ENCODE measurements at regions of chr2 and their contacts with region 1.

Region 1: DNA sequence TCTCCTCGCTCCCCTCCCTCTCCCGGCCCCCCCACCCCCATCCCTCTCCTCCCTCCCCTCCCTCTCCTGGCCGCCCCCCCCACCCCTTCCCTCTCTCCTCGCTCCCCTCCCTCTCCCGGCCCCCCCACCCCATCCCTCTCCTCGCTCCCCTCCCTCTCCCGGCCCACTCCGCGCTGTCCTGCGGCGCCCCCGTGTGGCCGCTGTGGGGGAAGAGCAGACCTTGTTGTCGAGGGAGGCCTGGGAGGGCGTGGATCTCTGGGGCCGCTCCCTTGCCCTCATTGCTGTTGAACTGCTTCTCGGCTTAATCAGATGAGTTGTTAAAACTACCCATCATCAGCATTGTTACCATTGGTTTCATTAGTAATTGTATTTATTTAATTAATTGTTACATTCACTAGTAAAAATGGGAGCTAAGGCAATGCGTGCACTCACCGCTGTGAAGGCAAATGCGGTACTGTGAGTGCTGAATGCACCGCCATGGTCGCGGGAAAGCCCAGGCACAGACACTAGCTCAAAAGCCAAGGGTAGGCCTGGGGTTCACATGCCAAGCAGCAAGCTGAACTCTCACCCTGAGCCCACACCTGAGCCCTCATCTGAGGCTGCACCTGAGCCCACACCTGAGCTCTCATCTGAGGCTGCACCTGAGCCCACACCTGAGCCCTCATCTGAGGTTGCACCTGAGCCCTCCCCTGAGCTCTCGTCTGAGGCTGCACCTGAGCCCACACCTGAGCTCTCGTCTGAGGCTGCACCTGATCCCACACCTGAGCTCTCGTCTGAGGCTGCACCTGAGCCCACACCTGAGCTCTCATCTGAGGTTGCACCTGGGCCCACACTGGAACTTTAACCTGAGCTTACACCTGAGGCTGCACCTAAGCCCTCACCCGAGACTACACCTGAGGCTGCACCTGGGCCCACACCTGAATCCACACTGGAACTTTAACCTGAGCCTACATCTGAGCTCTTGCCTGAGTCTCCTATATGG is 8.8 kb downstream of the RTP5 start:
- DNase-seq: peak; percentile 63 to 89 (median 73)
- ATAC-seq: no peak
- H3K4me3 ChIP-seq: no peak overlapping the region
- H3K4me3 Mint-ChIP-seq: no peak overlapping the region
- H3K27ac ChIP-seq: no peak overlapping the region
- H3K27ac Mint-ChIP-seq: no peak overlapping the region
- H3K4me1 ChIP-seq: peaks cover 35% of the 10 kb centered on the region
- H3K4me1 Mint-ChIP-seq: peaks cover 30% of the 10 kb centered on the region
- H3K27me3 ChIP-seq: no peaks in the 10 kb centered on the region
- H3K27me3 Mint-ChIP-seq: no peaks in the 10 kb centered on the region
- CTCF ChIP-seq: peak; percentile 59

Region 2: GRCh38 chr2:240426797-240427721 is 1451.2 kb before region 1 on chr2:
- CTCF ChIA-PET with region 1: no interaction called
- POLR2A ChIA-PET with region 1: no interaction called
- intact Hi-C with region 1: no loop called
- DNase-seq: peak in 1 of 14 experiments; percentile 23
- ATAC-seq: no peak
- H3K4me3 ChIP-seq: no peak overlapping the region
- H3K4me3 Mint-ChIP-seq: no peak overlapping the region
- H3K27ac ChIP-seq: no peak overlapping the region
- H3K27ac Mint-ChIP-seq: no peak overlapping the region
- H3K4me1 ChIP-seq: no peaks in the 10 kb centered on the region
- H3K4me1 Mint-ChIP-seq: no peaks in the 10 kb centered on the region
- H3K27me3 ChIP-seq: peaks cover 0 to 12% of the 10 kb centered on the region in 2 experiments
- H3K27me3 Mint-ChIP-seq: peaks cover 5% of the 10 kb centered on the region
- CTCF ChIP-seq: no peak

Region 3: GRCh38 chr2:240832205-240832727 is 1046.0 kb before region 1 on chr2:
- CTCF ChIA-PET with region 1: no interaction called
- POLR2A ChIA-PET with region 1: interaction called, 4 read pairs
- intact Hi-C with region 1: loop called (anchors 5 kb)
- DNase-seq: peak; percentile 98 to 100 (median 99)
- ATAC-seq: peak; percentile 91
- H3K4me3 ChIP-seq: peak overlapping the region; percentile 43
- H3K4me3 Mint-ChIP-seq: peak overlapping the region; percentile 38
- H3K27ac ChIP-seq: no peak overlapping the region
- H3K27ac Mint-ChIP-seq: no peak overlapping the region
- H3K4me1 ChIP-seq: peaks cover 14% of the 10 kb centered on the region
- H3K4me1 Mint-ChIP-seq: no peaks in the 10 kb centered on the region
- H3K27me3 ChIP-seq: peaks cover 17 to 26% of the 10 kb centered on the region in 2 experiments
- H3K27me3 Mint-ChIP-seq: peaks cover 36% of the 10 kb centered on the region
- CTCF ChIP-seq: no peak

Region 4: DNA sequence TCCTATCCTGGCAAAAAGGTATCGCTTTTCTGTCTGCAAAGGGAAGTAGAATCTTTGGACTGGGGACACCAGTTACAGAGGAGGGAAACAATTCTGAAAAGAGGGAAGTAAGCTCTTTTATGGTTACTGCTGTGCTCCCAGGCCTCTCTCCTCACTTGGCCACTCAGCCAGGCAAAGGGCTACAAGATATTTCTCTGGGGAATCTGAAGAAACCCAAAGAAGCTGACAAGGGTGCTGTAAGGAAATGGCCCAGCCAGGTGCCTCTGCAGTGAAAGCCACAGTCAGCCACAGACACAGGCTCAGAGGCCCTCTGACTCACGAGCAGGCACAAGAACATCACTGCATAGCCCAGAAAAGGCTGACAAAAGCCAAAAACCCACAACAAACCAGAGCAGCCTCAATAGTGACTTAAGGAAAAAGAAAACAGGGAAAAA is 568.6 kb before region 1 on chr2:
- CTCF ChIA-PET with region 1: no interaction called
- POLR2A ChIA-PET with region 1: no interaction called
- intact Hi-C with region 1: loop called in 1 of 2 experiments (anchors 5 kb)
- DNase-seq: peak; percentile 49 to 86 (median 68)
- ATAC-seq: peak; percentile 96
- H3K4me3 ChIP-seq: no peak overlapping the region
- H3K4me3 Mint-ChIP-seq: peak overlapping the region; percentile 68
- H3K27ac ChIP-seq: peak overlapping the region; percentile 31 to 42
- H3K27ac Mint-ChIP-seq: peak overlapping the region; percentile 87
- H3K4me1 ChIP-seq: peaks cover 69% of the 10 kb centered on the region
- H3K4me1 Mint-ChIP-seq: peaks cover 89% of the 10 kb centered on the region
- H3K27me3 ChIP-seq: no peaks in the 10 kb centered on the region
- H3K27me3 Mint-ChIP-seq: no peaks in the 10 kb centered on the region
- CTCF ChIP-seq: no peak

Region 5: GRCh38 chr2:241500431-241500975 is 377.8 kb before region 1 on chr2:
- CTCF ChIA-PET with region 1: no interaction called
- POLR2A ChIA-PET with region 1: no interaction called
- intact Hi-C with region 1: loop called in 1 of 2 experiments (anchors 5 kb)
- DNase-seq: no peak
- ATAC-seq: no peak
- H3K4me3 ChIP-seq: no peak overlapping the region
- H3K4me3 Mint-ChIP-seq: no peak overlapping the region
- H3K27ac ChIP-seq: no peak overlapping the region
- H3K27ac Mint-ChIP-seq: no peak overlapping the region
- H3K4me1 ChIP-seq: no peaks in the 10 kb centered on the region
- H3K4me1 Mint-ChIP-seq: no peaks in the 10 kb centered on the region
- H3K27me3 ChIP-seq: peaks cover 0 to 2% of the 10 kb centered on the region in 2 experiments
- H3K27me3 Mint-ChIP-seq: no peaks in the 10 kb centered on the region
- CTCF ChIP-seq: no peak

Region 6: GRCh38 chr2:241666627-241667400 is 211.5 kb before region 1 on chr2:
- CTCF ChIA-PET with region 1: no interaction called
- POLR2A ChIA-PET with region 1: no interaction called
- intact Hi-C with region 1: loop called in 1 of 2 experiments (anchors 2 kb)
- DNase-seq: no peak
- ATAC-seq: no peak
- H3K4me3 ChIP-seq: no peak overlapping the region
- H3K4me3 Mint-ChIP-seq: no peak overlapping the region
- H3K27ac ChIP-seq: no peak overlapping the region
- H3K27ac Mint-ChIP-seq: no peak overlapping the region
- H3K4me1 ChIP-seq: peaks cover 4% of the 10 kb centered on the region
- H3K4me1 Mint-ChIP-seq: peaks cover 5% of the 10 kb centered on the region
- H3K27me3 ChIP-seq: no peaks in the 10 kb centered on the region
- H3K27me3 Mint-ChIP-seq: no peaks in the 10 kb centered on the region
- CTCF ChIP-seq: no peak

Region 7: DNA sequence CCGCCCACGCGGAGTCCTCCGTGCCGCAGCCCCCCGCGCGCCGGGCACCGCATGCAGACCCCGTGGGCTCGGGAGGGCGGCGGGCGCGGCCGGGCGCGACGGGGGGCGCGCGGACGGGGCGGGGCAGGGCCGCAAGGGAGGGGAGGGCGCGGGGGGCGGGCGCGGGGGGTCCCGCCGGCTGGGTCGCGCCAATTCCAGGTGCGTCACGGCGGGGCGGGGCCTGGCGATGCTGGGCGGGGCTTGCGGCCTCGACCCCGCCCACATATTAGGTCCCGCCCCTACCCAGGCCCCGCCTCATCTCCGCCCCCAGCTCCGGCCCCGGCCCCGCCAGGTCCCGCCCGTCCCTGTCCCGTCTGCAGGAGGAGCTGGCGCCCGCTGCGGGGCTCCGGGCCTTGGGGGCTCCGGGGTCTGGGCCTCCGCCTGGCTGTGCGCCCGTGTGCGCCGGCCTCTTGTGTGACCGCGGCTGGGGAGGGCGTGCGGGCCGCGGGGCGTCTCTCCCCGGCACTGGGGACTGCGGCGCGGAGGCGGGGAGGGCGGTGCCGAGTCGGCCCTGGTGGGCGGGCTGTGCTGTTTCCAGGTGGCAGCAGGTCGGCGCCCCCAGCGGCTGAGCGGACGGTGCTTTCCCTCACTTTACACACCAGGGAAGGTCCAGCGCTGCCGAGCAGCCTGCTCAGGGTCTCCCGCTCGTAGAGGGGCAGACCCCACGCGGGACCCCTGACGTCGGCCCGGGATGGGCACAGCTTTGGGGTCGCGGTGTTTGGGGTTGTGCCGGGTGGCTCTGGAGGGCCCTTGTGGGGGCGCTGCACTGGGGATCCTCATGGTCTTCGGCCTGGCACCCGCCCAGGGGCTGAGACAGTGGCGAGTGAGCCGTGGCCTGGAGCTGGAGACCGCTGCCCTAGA is 175.9 kb before region 1 on chr2:
- CTCF ChIA-PET with region 1: interaction called, 4 read pairs
- POLR2A ChIA-PET with region 1: interaction called, 10 read pairs
- intact Hi-C with region 1: loop called (anchors 1 to 10 kb)
- DNase-seq: peak; percentile 81 to 94 (median 84)
- ATAC-seq: peak; percentile 73
- H3K4me3 ChIP-seq: peak overlapping the region; percentile 73
- H3K4me3 Mint-ChIP-seq: peak overlapping the region; percentile 93
- H3K27ac ChIP-seq: peak overlapping the region; percentile 34 to 67
- H3K27ac Mint-ChIP-seq: peak overlapping the region; percentile 87
- H3K4me1 ChIP-seq: peaks cover 28% of the 10 kb centered on the region
- H3K4me1 Mint-ChIP-seq: peaks cover 28% of the 10 kb centered on the region
- H3K27me3 ChIP-seq: no peaks in the 10 kb centered on the region
- H3K27me3 Mint-ChIP-seq: no peaks in the 10 kb centered on the region
- CTCF ChIP-seq: peak; percentile 60

Region 8: GRCh38 chr2:241788572-241788971 is 89.7 kb before region 1 on chr2:
- CTCF ChIA-PET with region 1: no interaction called
- POLR2A ChIA-PET with region 1: no interaction called
- intact Hi-C with region 1: no loop called
- DNase-seq: peak in 2 of 14 experiments; percentile 22 to 42
- ATAC-seq: no peak
- H3K4me3 ChIP-seq: no peak overlapping the region
- H3K4me3 Mint-ChIP-seq: no peak overlapping the region
- H3K27ac ChIP-seq: no peak overlapping the region
- H3K27ac Mint-ChIP-seq: no peak overlapping the region
- H3K4me1 ChIP-seq: no peaks in the 10 kb centered on the region
- H3K4me1 Mint-ChIP-seq: no peaks in the 10 kb centered on the region
- H3K27me3 ChIP-seq: no peaks in the 10 kb centered on the region
- H3K27me3 Mint-ChIP-seq: no peaks in the 10 kb centered on the region
- CTCF ChIP-seq: no peak